Transverse colon (tissue), 4 donors: ENCODE measurements at regions of chr1 and their contacts with region 1.

Region 1: DNA sequence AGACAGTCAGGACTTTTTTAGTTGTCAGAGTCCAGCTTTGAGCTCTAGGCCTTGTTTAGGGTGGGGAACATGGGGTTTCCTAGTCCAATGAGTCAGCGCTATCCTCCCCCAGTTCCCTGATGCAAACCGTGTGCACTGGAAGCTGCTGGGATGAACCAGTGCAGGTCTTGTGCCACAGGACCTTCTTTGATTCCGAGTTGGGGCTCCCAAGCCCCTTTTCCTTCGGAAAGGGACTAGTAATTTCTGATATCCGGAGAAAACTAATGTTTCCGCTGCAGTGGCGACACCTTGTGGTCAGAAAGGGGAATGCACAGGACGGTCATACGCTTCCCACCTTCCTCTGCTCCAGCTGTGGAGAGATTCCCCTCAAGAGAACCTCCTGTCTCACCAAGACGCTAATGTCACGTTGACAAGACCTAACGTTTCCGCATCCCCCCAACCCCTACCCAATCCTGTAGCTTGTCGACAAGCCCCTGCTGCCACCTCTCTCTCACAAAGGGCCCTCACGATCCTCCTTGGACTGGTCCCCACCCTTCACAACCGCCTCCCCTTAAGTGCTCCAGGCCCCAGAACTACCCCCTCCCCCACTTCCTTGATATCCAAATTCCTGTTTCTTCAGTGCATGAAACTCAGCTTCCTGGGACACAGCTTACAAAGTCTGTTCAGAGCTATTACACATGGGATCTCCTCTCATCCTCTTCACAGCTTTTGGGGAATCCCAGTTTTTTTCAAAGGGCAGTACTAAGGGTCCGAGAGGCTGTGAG is 30.9 kb downstream of the GPA33 start:
- DNase-seq: peak; percentile 74
- H3K4me3 ChIP-seq: no peak overlapping the region
- H3K27ac ChIP-seq: no peak overlapping the region
- H3K4me1 ChIP-seq: peaks cover 0 to 6% (median 2%) of the 10 kb centered on the region in 4 donors
- H3K27me3 ChIP-seq: no peaks in the 10 kb centered on the region
- CTCF ChIP-seq: peak; percentile 90 to 98 (median 96)
- EP300 ChIP-seq: no peak
- POLR2A ChIP-seq: no peak

Region 2: DNA sequence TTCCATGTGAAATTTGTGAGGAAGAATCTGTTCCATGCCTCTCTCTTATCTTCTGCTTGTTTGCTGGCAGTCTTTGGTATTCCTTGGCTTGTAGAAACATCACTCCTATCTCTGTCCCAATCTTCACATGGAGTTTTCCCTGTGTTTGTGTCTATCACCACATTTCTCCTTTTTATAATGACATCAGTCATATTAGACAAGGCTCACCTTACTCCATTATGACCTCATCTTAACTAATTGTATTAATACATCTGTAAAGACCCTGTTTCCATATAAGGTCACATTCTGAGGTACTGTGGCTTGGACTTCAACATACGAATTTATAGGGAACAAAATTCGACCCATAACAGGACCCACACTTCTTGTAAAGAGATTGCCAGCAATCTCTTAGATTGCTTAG is 292.3 kb before region 1 on chr1:
- in situ Hi-C with region 1: no loop called
- intact Hi-C with region 1: no loop called
- DNase-seq: no peak
- H3K4me3 ChIP-seq: no peak overlapping the region
- H3K27ac ChIP-seq: no peak overlapping the region
- H3K4me1 ChIP-seq: no peaks in the 10 kb centered on the region
- H3K27me3 ChIP-seq: no peaks in the 10 kb centered on the region
- CTCF ChIP-seq: no peak
- EP300 ChIP-seq: no peak
- POLR2A ChIP-seq: no peak

Region 3: GRCh38 chr1:166884040-166884642 is 175.1 kb before region 1 on chr1:
- in situ Hi-C with region 1: loop called in 1 of 4 experiments (anchors 10 kb)
- intact Hi-C with region 1: loop called (anchors 2 kb)
- DNase-seq: peak; percentile 53
- H3K4me3 ChIP-seq: peak overlapping the region in 1 of 4 donors; percentile 37
- H3K27ac ChIP-seq: no peak overlapping the region
- H3K4me1 ChIP-seq: peaks cover 0 to 8% (median 7%) of the 10 kb centered on the region in 4 donors
- H3K27me3 ChIP-seq: peaks cover 27% of the 10 kb centered on the region
- CTCF ChIP-seq: peak; percentile 66 to 76 (median 70)
- EP300 ChIP-seq: no peak
- POLR2A ChIP-seq: no peak

Region 4: DNA sequence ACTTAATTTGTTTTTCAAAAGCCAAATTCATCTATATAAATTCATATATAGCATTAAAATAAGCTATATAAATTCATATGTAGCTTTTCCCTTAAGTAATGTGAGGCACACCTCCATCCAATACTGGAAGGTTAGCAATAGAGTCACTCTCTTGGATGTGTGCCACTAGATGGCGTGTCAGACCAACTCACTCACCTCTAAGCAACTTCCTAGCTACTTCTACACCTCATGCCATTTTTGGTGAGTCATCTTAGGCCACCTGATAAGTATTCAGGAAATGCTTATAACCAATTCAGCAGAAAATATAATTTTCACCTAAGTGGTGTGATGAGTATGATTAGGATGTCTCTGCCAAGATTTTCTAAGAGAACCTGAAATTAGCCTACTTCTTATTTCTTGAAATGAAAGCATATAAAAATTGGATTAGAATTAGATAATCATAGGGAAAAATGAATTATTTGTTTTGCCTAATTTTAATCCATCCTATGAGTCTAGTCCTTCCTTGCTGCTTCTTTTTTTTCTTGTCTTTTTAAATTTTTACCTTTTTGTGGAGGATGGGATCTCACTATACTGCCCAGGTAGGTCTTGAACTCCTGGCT is 148.7 kb before region 1 on chr1:
- in situ Hi-C with region 1: loop called in 2 of 4 experiments (anchors 5 kb)
- intact Hi-C with region 1: loop called (anchors 1 kb)
- DNase-seq: peak; percentile 85
- H3K4me3 ChIP-seq: no peak overlapping the region
- H3K27ac ChIP-seq: no peak overlapping the region
- H3K4me1 ChIP-seq: peaks cover 0 to 4% (median 0%) of the 10 kb centered on the region in 4 donors
- H3K27me3 ChIP-seq: no peaks in the 10 kb centered on the region
- CTCF ChIP-seq: peak; percentile 64 to 85 (median 70)
- EP300 ChIP-seq: no peak
- POLR2A ChIP-seq: no peak

Region 5: GRCh38 chr1:166920561-166921475 is 138.4 kb before region 1 on chr1:
- in situ Hi-C with region 1: loop called in 1 of 4 experiments (anchors 10 kb)
- intact Hi-C with region 1: no loop called
- DNase-seq: no peak
- H3K4me3 ChIP-seq: peak overlapping the region; percentile 10 to 50 (median 36)
- H3K27ac ChIP-seq: peak overlapping the region in 2 of 4 donors; percentile 8 to 52
- H3K4me1 ChIP-seq: peaks cover 0 to 19% (median 8%) of the 10 kb centered on the region in 4 donors
- H3K27me3 ChIP-seq: peaks cover 44% of the 10 kb centered on the region
- CTCF ChIP-seq: no peak
- EP300 ChIP-seq: no peak
- POLR2A ChIP-seq: no peak